Gastrocnemius medialis (tissue), 4 donors: ENCODE measurements at regions of chr4 and their contacts with region 1.

Region 1: DNA sequence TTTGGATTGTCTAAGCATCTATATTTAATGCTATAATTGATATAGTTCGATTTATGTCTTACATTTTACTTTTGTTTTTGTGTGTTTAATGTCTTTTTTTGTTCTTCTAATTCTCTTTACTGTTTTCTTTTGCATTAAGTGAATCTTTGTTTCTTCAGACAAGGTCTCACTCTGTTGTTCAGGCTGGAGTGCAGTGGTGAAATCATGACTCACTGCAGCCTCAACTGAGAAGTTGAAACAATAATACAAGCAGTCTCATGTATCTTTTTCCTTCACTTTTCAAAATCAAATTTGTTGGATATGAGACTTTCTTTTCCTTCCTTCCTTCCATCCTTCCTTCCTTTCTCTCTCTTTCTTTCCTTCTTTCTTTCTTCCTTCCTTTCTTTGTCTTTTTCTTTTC is 1401.6 kb downstream of the ADGRL3 start:
- DNase-seq: no peak
- ATAC-seq: no peak
- H3K4me3 ChIP-seq: no peak overlapping the region
- H3K27ac ChIP-seq: no peak overlapping the region
- H3K4me1 ChIP-seq: no peaks in the 10 kb centered on the region
- H3K27me3 ChIP-seq: no peaks in the 10 kb centered on the region
- CTCF ChIP-seq: no peak
- POLR2A ChIP-seq: no peak

Region 2: GRCh38 chr4:62709618-62710252 is 108.0 kb after region 1 on chr4:
- in situ Hi-C with region 1: no loop called
- intact Hi-C with region 1: loop called (anchors 5 kb)
- DNase-seq: no peak
- ATAC-seq: no peak
- H3K4me3 ChIP-seq: no peak overlapping the region
- H3K27ac ChIP-seq: no peak overlapping the region
- H3K4me1 ChIP-seq: no peaks in the 10 kb centered on the region
- H3K27me3 ChIP-seq: no peaks in the 10 kb centered on the region
- CTCF ChIP-seq: peak in 3 of 5 experiments; percentile 32 to 57 (median 45)
- POLR2A ChIP-seq: no peak

Region 3: DNA sequence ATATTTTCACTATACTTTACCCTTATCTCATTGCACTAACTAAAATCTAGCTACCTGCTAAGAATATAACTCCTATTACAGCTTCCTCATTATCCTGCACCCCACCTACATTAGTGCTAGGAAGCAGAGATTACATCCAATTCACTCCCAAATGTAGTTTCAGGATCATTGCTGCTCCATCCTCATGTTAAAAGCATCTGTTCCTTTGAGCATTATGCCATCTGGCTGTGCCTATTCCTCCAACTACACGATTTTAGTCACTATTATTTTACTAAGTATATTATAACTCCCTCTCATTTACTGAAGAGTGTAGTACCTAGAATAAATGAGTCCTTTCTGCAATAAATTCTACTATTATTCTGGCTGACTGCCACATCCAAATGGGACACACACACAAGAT is 220.6 kb after region 1 on chr4:
- in situ Hi-C with region 1: no loop called
- intact Hi-C with region 1: no loop called
- DNase-seq: no peak
- ATAC-seq: no peak
- H3K4me3 ChIP-seq: no peak overlapping the region
- H3K27ac ChIP-seq: no peak overlapping the region
- H3K4me1 ChIP-seq: no peaks in the 10 kb centered on the region
- H3K27me3 ChIP-seq: no peaks in the 10 kb centered on the region
- CTCF ChIP-seq: no peak
- POLR2A ChIP-seq: no peak